CD8-positive, alpha-beta T cell (primary cell): ENCODE measurements at regions of chr16 and their contacts with region 1.

Region 1: GRCh38 chr16:3094289-3095027 is 4.6 kb downstream of the ZSCAN10 start:
- DNase-seq: peak in 6 of 9 experiments; percentile 19 to 80 (median 62)
- ATAC-seq: peak; percentile 61
- H3K4me3 ChIP-seq: no peak overlapping the region
- H3K4me3 Mint-ChIP-seq: no peak overlapping the region
- H3K27ac ChIP-seq: no peak overlapping the region
- H3K27ac Mint-ChIP-seq: peak overlapping the region; percentile 43
- H3K4me1 ChIP-seq: peaks cover 27% of the 10 kb centered on the region
- H3K4me1 Mint-ChIP-seq: peaks cover 38% of the 10 kb centered on the region
- H3K27me3 ChIP-seq: no peaks in the 10 kb centered on the region
- H3K27me3 Mint-ChIP-seq: no peaks in the 10 kb centered on the region
- CTCF ChIP-seq: peak; percentile 55

Region 2: DNA sequence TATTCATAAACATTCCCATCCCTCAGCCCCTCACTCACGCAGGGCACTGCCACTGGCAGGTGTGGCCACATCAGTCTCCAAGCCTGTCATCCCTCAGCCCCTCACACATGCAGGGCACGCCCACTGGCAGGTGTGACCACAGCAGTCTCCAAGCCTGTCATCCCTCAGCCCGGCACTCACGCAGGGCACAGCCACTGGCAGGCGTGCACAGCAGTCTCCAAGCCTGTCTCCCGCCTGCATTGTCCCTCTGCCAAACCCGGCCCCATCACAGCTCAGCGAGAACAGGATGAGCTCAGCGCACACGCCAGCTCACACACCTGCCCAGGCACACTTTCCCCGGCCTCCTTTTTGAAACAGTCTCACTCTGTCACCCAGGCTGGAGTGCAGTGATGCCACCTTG is 141.8 kb before region 1 on chr16:
- CTCF ChIA-PET with region 1: no interaction called
- POLR2A ChIA-PET with region 1: no interaction called
- intact Hi-C with region 1: no loop called
- DNase-seq: no peak
- ATAC-seq: no peak
- H3K4me3 ChIP-seq: no peak overlapping the region
- H3K4me3 Mint-ChIP-seq: no peak overlapping the region
- H3K27ac ChIP-seq: no peak overlapping the region
- H3K27ac Mint-ChIP-seq: no peak overlapping the region
- H3K4me1 ChIP-seq: no peaks in the 10 kb centered on the region
- H3K4me1 Mint-ChIP-seq: no peaks in the 10 kb centered on the region
- H3K27me3 ChIP-seq: peaks cover 0 to 5% of the 10 kb centered on the region in 2 experiments
- H3K27me3 Mint-ChIP-seq: peaks cover 11% of the 10 kb centered on the region
- CTCF ChIP-seq: no peak

Region 3: GRCh38 chr16:3029537-3030402 is 64.7 kb before region 1 on chr16:
- CTCF ChIA-PET with region 1: interaction called, 21 read pairs
- POLR2A ChIA-PET with region 1: no interaction called
- intact Hi-C with region 1: no loop called
- DNase-seq: peak in 4 of 9 experiments; percentile 26 to 64 (median 42)
- ATAC-seq: peak; percentile 15
- H3K4me3 ChIP-seq: peak overlapping the region in 1 of 2 experiments; percentile 28
- H3K4me3 Mint-ChIP-seq: peak overlapping the region; percentile 66
- H3K27ac ChIP-seq: no peak overlapping the region
- H3K27ac Mint-ChIP-seq: no peak overlapping the region
- H3K4me1 ChIP-seq: peaks cover 33% of the 10 kb centered on the region
- H3K4me1 Mint-ChIP-seq: peaks cover 18% of the 10 kb centered on the region
- H3K27me3 ChIP-seq: peaks cover 20 to 30% of the 10 kb centered on the region in 2 experiments
- H3K27me3 Mint-ChIP-seq: peaks cover 38% of the 10 kb centered on the region
- CTCF ChIP-seq: no peak

Region 4: DNA sequence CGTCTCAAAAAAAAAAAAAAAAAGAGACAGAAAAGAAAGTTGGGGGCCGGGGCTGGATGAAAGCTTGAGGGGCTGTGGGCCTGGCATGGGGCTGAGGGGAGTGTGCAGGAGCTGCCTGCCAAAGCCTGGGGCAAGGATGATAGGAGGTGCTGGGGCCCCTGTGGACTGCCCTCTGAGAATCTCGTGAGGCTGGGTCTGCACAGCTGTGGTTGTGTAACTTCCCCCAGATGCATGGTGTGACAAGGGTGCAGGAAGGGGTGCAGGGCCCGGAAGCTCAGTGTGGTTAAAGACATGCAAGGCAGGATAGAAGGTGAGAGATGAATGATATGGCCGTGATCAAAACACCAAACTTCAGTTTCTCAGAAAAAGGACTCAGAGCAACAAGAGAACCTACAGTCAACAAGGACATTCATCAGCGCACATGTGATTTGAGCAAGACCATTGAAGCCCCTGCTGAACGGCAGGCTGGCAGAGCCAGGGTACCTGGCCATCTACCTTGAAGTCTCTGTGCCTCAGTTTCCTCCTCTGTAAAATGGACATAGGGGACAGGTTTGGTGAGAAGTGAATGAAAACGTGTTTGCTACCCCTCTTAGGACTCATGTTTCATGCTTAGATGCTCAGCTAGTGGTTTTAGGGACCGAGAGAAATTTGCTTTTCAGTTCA is 19.5 kb before region 1 on chr16:
- CTCF ChIA-PET with region 1: interaction called, 55 read pairs
- POLR2A ChIA-PET with region 1: interaction called, 26 read pairs
- intact Hi-C with region 1: loop called (anchors 2 kb)
- DNase-seq: peak; percentile 52 to 95 (median 86)
- ATAC-seq: peak; percentile 88
- H3K4me3 ChIP-seq: peak overlapping the region; percentile 3 to 19
- H3K4me3 Mint-ChIP-seq: peak overlapping the region; percentile 72
- H3K27ac ChIP-seq: peak overlapping the region; percentile 49 to 81
- H3K27ac Mint-ChIP-seq: peak overlapping the region; percentile 95
- H3K4me1 ChIP-seq: peaks cover 87% of the 10 kb centered on the region
- H3K4me1 Mint-ChIP-seq: peaks cover 89% of the 10 kb centered on the region
- H3K27me3 ChIP-seq: no peaks in the 10 kb centered on the region
- H3K27me3 Mint-ChIP-seq: no peaks in the 10 kb centered on the region
- CTCF ChIP-seq: no peak

Region 5: DNA sequence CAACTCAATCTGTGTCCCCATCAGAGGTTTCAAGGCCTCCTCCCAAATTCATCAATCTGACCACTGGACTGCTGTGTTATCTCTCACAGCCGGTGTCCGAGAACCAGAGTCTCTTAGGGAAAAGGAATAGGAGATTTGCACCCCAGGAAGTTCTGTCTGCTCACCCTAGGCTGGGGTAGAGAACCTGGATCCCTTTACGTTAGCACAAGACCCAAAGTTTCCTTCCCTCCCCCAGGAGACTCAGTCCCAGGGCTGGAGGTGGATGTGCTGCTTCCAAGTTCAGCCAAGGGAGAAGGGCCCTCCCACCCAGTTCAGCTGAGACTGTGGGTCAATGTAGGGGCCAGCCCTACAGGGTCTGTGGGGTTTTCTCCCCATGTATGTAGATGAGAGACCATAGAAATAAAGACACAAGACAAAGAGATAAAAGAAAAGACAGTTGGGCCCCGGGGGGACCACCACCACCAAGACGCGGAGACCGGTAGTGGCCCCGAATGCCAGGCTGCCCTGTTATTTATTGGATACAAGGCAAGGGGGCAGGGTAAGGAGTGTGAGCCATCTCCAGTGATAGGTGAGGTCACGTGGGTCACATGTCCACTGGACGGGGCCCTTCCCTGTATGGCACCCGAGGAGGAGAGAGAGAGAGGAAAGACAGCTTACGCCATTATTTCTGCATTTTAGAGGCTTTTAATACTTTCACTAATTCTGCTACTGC is 70.8 kb after region 1 on chr16:
- CTCF ChIA-PET with region 1: interaction called, 5 read pairs
- POLR2A ChIA-PET with region 1: no interaction called
- intact Hi-C with region 1: loop called (anchors 1 to 2 kb)
- DNase-seq: no peak
- ATAC-seq: peak; percentile 16
- H3K4me3 ChIP-seq: peak overlapping the region in 1 of 2 experiments; percentile 31
- H3K4me3 Mint-ChIP-seq: peak overlapping the region; percentile 42
- H3K27ac ChIP-seq: peak overlapping the region in 1 of 2 experiments; percentile 36
- H3K27ac Mint-ChIP-seq: peak overlapping the region; percentile 58
- H3K4me1 ChIP-seq: peaks cover 7% of the 10 kb centered on the region
- H3K4me1 Mint-ChIP-seq: peaks cover 11% of the 10 kb centered on the region
- H3K27me3 ChIP-seq: peaks cover 0 to 2% of the 10 kb centered on the region in 2 experiments
- H3K27me3 Mint-ChIP-seq: no peaks in the 10 kb centered on the region
- CTCF ChIP-seq: no peak